Common myeloid progenitor, CD34-positive (primary cell): ENCODE measurements at regions of chr18 and their contacts with region 1.

Region 1: DNA sequence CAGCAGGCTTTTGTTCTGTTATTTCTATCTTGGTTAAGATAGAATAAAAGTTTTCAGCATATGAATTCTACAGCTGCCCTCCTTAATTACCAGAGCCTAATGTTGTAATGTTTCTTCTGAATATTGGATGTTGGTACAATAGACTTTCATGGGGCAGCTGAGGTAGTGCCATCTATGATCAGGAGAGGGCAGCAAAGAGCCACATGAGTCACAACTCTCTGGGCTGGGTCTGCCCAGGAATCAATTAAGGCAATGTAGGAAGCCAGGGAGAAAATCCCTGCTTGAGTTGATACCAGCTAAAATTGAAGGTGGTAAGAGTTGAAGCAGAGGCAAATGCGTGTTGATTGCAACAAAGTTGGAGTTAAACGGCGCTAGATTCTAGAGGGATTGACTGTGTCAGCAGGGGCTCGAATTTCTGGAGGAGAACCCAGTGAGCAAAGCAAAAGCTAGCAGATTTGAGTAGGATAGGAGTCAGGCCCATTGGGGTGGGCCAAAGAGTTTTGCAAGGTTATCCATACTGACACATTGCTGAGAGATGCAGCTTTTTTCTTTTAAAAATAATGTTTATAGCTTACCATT is 10.6 kb upstream of the MC5R start:
- DNase-seq: peak; percentile 47 to 69 (median 57)
- H3K4me3 ChIP-seq: no peak overlapping the region
- H3K27ac ChIP-seq: no peak overlapping the region
- H3K4me1 ChIP-seq: peaks cover 0 to 2% (median 0%) of the 10 kb centered on the region in 4 experiments
- H3K27me3 ChIP-seq: peaks cover 0 to 7% (median 2%) of the 10 kb centered on the region in 5 experiments

Region 2: DNA sequence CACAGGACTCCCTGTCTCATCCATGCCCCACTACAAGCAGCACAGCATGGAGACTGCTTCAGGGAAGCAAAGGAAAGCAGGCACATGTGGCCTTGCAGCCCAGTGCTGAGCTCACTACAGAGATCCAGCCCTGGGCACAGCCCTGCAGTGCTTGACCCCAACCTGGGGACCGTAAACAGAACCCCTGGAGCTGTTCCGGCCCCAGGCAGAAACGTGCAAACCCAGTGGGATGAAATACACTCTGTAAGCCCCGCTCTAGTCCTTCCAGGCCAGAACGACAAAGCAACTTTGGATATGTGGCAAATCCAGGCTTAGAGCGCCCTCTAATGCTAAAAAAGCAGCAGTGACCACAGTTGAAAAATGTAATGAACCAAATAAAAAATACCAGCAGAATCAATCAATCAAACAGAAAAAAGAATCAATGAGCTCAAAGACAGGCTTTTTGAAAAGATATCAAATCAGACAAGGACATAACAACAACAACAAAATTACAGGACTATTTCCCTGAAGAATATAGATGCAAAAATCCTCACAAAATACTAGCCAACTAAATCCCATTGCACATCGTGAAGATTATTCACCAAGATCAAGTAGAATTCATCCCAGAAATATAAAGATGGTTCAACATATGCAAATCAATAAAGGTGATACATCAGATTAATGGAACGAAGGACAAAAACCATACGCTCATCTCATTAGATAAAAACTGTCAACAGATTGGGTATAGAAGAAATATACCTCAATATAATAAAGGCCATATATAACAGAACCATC is 273.3 kb after region 1 on chr18:
- CTCF ChIA-PET with region 1: interaction called, 23 read pairs
- POLR2A ChIA-PET with region 1: no interaction called
- DNase-seq: peak; percentile 15 to 53 (median 52)
- H3K4me3 ChIP-seq: no peak overlapping the region
- H3K27ac ChIP-seq: no peak overlapping the region
- H3K4me1 ChIP-seq: no peaks in the 10 kb centered on the region
- H3K27me3 ChIP-seq: no peaks in the 10 kb centered on the region